Panc1 (cell line): ENCODE measurements at regions of chr2 and their contacts with region 1.

Region 1: GRCh38 chr2:150676747-150677383 is 189.4 kb upstream of the RND3 start:
- DNase-seq: no peak
- ATAC-seq: no peak
- H3K4me3 ChIP-seq: no peak overlapping the region
- H3K27ac ChIP-seq: no peak overlapping the region
- H3K4me1 ChIP-seq: no peaks in the 10 kb centered on the region
- H3K27me3 ChIP-seq: no peaks in the 10 kb centered on the region
- CTCF ChIP-seq: no peak

Region 2: GRCh38 chr2:150856586-150857281 is 179.9 kb after region 1 on chr2:
- CTCF ChIA-PET with region 1: no interaction called
- POLR2A ChIA-PET with region 1: no interaction called
- in situ Hi-C with region 1: no loop called
- intact Hi-C with region 1: no loop called
- DNase-seq: no peak
- ATAC-seq: no peak
- H3K4me3 ChIP-seq: no peak overlapping the region
- H3K27ac ChIP-seq: no peak overlapping the region
- H3K4me1 ChIP-seq: no peaks in the 10 kb centered on the region
- H3K27me3 ChIP-seq: no peaks in the 10 kb centered on the region
- CTCF ChIP-seq: no peak

Region 3: GRCh38 chr2:151395509-151396374 is 718.9 kb after region 1 on chr2:
- CTCF ChIA-PET with region 1: no interaction called
- POLR2A ChIA-PET with region 1: interaction called, 10 read pairs
- in situ Hi-C with region 1: no loop called
- intact Hi-C with region 1: no loop called
- DNase-seq: no peak
- ATAC-seq: no peak
- H3K4me3 ChIP-seq: no peak overlapping the region
- H3K27ac ChIP-seq: no peak overlapping the region
- H3K4me1 ChIP-seq: no peaks in the 10 kb centered on the region
- H3K27me3 ChIP-seq: no peaks in the 10 kb centered on the region
- CTCF ChIP-seq: no peak